ENCODE measurements at regions of chr3 and their contacts with region 1.

Region 1: GRCh38 chr3:193971261-193971751 is 164.6 kb upstream of the HES1 start:
- DNase-seq: peak; percentile 40
- H3K4me3 Mint-ChIP-seq: no peak overlapping the region
- H3K27ac Mint-ChIP-seq: peak overlapping the region; percentile 2
- H3K4me1 Mint-ChIP-seq: peaks cover 18% of the 10 kb centered on the region
- H3K27me3 Mint-ChIP-seq: peaks cover 18% of the 10 kb centered on the region

Region 2: GRCh38 chr3:194070634-194071409 is 99.5 kb after region 1 on chr3:
- CTCF ChIA-PET with region 1: no interaction called
- intact Hi-C with region 1: loop called (anchors 2 kb)
- DNase-seq: peak; percentile 88
- H3K4me3 Mint-ChIP-seq: peak overlapping the region; percentile 57
- H3K27ac Mint-ChIP-seq: no peak overlapping the region
- H3K4me1 Mint-ChIP-seq: peaks cover 22% of the 10 kb centered on the region
- H3K27me3 Mint-ChIP-seq: peaks cover 19% of the 10 kb centered on the region

Region 3: GRCh38 chr3:194103983-194104751 is 132.9 kb after region 1 on chr3:
- CTCF ChIA-PET with region 1: no interaction called
- intact Hi-C with region 1: loop called (anchors 2 kb)
- DNase-seq: no peak
- H3K4me3 Mint-ChIP-seq: no peak overlapping the region
- H3K27ac Mint-ChIP-seq: no peak overlapping the region
- H3K4me1 Mint-ChIP-seq: peaks cover 13% of the 10 kb centered on the region
- H3K27me3 Mint-ChIP-seq: peaks cover under 1% of the 10 kb centered on the region

Region 4: GRCh38 chr3:194203482-194204041 is 232.3 kb after region 1 on chr3:
- CTCF ChIA-PET with region 1: no interaction called
- intact Hi-C with region 1: loop called (anchors 2 kb)
- DNase-seq: peak; percentile 62
- H3K4me3 Mint-ChIP-seq: peak overlapping the region; percentile 71
- H3K27ac Mint-ChIP-seq: peak overlapping the region; percentile 57
- H3K4me1 Mint-ChIP-seq: peaks cover 18% of the 10 kb centered on the region
- H3K27me3 Mint-ChIP-seq: peaks cover 14% of the 10 kb centered on the region